ENCODE measurements at regions of chr9 and their contacts with region 1.

Region 1: DNA sequence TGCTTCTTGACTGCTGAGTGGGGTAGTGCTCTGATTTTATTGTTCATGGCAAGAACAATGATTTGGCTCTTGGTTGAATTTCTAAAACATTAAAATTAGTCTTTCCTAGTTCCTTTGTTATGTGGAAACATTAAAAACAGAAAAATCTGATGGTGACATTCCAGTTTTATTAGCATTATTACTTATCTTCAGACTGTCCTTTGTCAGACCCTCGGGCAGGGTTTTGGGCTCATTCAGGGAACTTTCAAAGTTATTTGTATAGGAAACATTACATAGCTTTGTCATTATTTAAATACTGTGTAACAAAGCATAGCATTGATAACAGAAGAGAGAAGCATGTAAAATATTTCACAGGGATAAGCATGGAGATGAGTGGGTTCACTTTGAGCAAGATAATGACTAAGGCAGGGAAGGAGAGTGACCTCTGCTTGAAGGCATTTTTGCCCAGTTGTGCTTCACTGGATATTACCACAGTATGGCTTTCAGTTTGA is 119.9 kb downstream of the KDM4C start:
- DNase-seq: no peak
- ATAC-seq: no peak
- H3K4me3 ChIP-seq: no peak overlapping the region
- H3K4me3 Mint-ChIP-seq: no peak overlapping the region
- H3K27ac ChIP-seq: no peak overlapping the region
- H3K27ac Mint-ChIP-seq: no peak overlapping the region
- H3K4me1 ChIP-seq: peaks cover 3 to 4% of the 10 kb centered on the region in 2 donors
- H3K4me1 Mint-ChIP-seq: peaks cover 49% of the 10 kb centered on the region
- H3K27me3 ChIP-seq: no peaks in the 10 kb centered on the region
- H3K27me3 Mint-ChIP-seq: no peaks in the 10 kb centered on the region
- CTCF ChIP-seq: no peak

Region 2: DNA sequence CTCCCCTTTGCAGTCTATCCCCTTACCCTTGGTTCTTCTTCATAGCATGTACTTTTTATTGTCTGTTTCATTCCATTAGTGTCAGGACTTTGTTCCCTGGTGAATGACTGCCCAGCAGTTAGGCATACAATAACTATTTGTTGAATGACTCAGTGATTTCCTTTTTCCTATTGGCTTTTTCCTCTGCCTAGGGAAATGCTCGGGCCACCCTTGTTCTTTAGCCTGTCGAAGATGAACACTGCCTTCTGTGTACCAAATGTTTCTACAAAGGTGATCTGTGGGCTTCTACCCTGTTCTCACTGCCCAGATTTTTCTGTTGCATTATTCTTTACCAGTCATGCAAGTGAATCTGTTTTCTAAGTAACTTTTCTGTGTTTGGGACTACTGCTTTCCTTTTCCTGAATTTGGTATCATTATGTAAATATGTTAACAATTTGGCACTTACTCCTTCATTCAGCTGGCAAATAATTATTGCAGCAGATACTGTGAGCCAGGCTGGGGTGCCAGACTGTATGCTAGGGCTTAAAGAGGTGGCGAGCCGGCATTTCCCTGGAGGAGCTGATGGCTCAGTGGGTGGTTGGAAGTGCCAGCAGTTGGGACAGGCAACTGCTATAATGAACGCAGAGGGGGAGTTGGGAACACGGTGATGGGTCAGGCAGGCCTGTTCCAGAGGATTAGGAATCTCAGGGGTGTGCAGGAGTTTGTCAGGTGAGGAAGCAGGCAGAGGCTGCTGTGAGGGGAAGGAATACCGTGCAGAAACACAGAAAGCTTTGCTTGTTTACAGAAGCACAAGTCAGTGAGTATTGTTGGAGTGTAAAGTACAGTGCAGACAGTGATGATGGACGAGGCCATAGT is 89.3 kb before region 1 on chr9:
- CTCF ChIA-PET with region 1: no interaction called
- POLR2A ChIA-PET with region 1: no interaction called
- intact Hi-C with region 1: no loop called
- DNase-seq: no peak
- ATAC-seq: no peak
- H3K4me3 ChIP-seq: no peak overlapping the region
- H3K4me3 Mint-ChIP-seq: no peak overlapping the region
- H3K27ac ChIP-seq: peak overlapping the region in 1 of 2 donors; percentile 34
- H3K27ac Mint-ChIP-seq: peak overlapping the region; percentile 60
- H3K4me1 ChIP-seq: peaks cover 39 to 45% of the 10 kb centered on the region in 2 donors
- H3K4me1 Mint-ChIP-seq: peaks cover 58% of the 10 kb centered on the region
- H3K27me3 ChIP-seq: no peaks in the 10 kb centered on the region
- H3K27me3 Mint-ChIP-seq: no peaks in the 10 kb centered on the region
- CTCF ChIP-seq: no peak

Region 3: GRCh38 chr9:6894135-6894534 is 16.4 kb after region 1 on chr9:
- CTCF ChIA-PET with region 1: no interaction called
- POLR2A ChIA-PET with region 1: no interaction called
- intact Hi-C with region 1: loop called (anchors 2 kb)
- DNase-seq: no peak
- ATAC-seq: no peak
- H3K4me3 ChIP-seq: no peak overlapping the region
- H3K4me3 Mint-ChIP-seq: no peak overlapping the region
- H3K27ac ChIP-seq: no peak overlapping the region
- H3K27ac Mint-ChIP-seq: no peak overlapping the region
- H3K4me1 ChIP-seq: peaks cover 26 to 29% of the 10 kb centered on the region in 2 donors
- H3K4me1 Mint-ChIP-seq: peaks cover 26% of the 10 kb centered on the region
- H3K27me3 ChIP-seq: no peaks in the 10 kb centered on the region
- H3K27me3 Mint-ChIP-seq: no peaks in the 10 kb centered on the region
- CTCF ChIP-seq: no peak